ENCODE measurements at regions of chr22 and their contacts with region 1.

Region 1: DNA sequence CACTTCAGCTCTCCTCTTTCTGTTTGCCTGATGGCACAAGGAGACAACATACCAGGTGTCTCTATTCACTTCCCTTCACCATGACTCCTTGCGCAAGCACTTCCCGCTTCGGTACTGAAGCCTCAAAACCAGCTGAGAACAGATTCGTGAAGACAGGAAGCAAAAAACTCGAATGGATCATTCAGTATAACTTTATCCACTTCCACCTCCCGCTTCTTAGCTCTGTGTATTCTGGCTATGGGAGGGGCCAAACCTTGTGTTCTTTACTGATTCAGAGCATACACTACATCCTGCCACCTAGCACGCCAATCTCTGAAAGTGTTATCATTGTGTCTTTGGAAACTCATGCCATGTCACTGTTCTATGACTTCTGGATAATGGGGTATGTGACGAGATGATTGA is 62.2 kb upstream of the ADA2 start:
- DNase-seq: no peak
- H3K4me3 ChIP-seq: no peak overlapping the region
- H3K27ac ChIP-seq: no peak overlapping the region
- H3K4me1 ChIP-seq: no peaks in the 10 kb centered on the region
- H3K27me3 ChIP-seq: no peaks in the 10 kb centered on the region
- CTCF ChIP-seq: no peak
- POLR2A ChIP-seq: no peak

Region 2: GRCh38 chr22:17348461-17349113 is 67.1 kb after region 1 on chr22:
- intact Hi-C with region 1: loop called in 1 of 2 experiments (anchors 10 kb)
- DNase-seq: no peak
- H3K4me3 ChIP-seq: no peak overlapping the region
- H3K27ac ChIP-seq: no peak overlapping the region
- H3K4me1 ChIP-seq: no peaks in the 10 kb centered on the region
- H3K27me3 ChIP-seq: peaks cover 3% of the 10 kb centered on the region
- CTCF ChIP-seq: no peak
- POLR2A ChIP-seq: no peak

Measured in adrenal gland (tissue), 19 donors.